HepG2 (cell line): ENCODE measurements at regions of chr12 and their contacts with region 1.

Region 1: GRCh38 chr12:53508534-53509199 is 1.4 kb upstream of the NPFF start:
- DNase-seq: peak; percentile 72
- ATAC-seq: peak; percentile 93
- H3K4me3 ChIP-seq: no peak overlapping the region
- H3K27ac ChIP-seq: no peak overlapping the region
- H3K4me1 ChIP-seq: no peaks in the 10 kb centered on the region
- H3K27me3 ChIP-seq: no peaks in the 10 kb centered on the region
- CTCF ChIP-seq: peak; percentile 96
- EP300 ChIP-seq: no peak
- POLR2A ChIP-seq: no peak
- RAD21 ChIP-seq: peak; percentile 86

Region 2: GRCh38 chr12:53352331-53353256 is 156.1 kb before region 1 on chr12:
- CTCF ChIA-PET with region 1: interaction called, 4 read pairs
- POLR2A ChIA-PET with region 1: no interaction called
- in situ Hi-C with region 1: no loop called
- intact Hi-C with region 1: loop called (anchors 2 kb)
- DNase-seq: peak; percentile 80
- ATAC-seq: peak; percentile 98
- H3K4me3 ChIP-seq: no peak overlapping the region
- H3K27ac ChIP-seq: no peak overlapping the region
- H3K4me1 ChIP-seq: peaks cover 22% of the 10 kb centered on the region
- H3K27me3 ChIP-seq: no peaks in the 10 kb centered on the region
- CTCF ChIP-seq: peak; percentile 93
- EP300 ChIP-seq: no peak
- POLR2A ChIP-seq: no peak
- RAD21 ChIP-seq: peak; percentile 89

Region 3: DNA sequence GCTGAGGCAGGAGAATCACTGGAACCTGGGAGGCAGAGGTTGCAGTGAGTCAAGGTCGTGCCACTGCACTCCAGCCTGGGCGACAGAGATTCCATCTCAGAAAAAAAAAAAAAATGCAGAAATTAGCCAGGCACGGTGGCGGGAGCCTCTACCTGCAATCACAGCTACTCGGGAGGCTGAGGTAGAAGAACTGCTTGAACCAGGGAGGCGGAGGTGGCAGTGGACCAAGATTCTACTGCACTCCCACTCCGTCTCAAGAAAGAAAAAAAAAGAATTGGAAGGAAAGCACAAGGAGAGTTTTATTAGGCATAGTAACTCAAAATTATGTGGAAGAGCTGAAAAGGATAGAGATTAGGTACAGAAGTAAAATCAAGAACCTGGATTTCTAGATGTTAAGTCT is 105.8 kb before region 1 on chr12:
- CTCF ChIA-PET with region 1: no interaction called
- POLR2A ChIA-PET with region 1: no interaction called
- in situ Hi-C with region 1: no loop called
- intact Hi-C with region 1: no loop called
- DNase-seq: no peak
- ATAC-seq: no peak
- H3K4me3 ChIP-seq: no peak overlapping the region
- H3K27ac ChIP-seq: no peak overlapping the region
- H3K4me1 ChIP-seq: peaks cover 5% of the 10 kb centered on the region
- H3K27me3 ChIP-seq: no peaks in the 10 kb centered on the region; a peak in 1 of 5 replicates
- CTCF ChIP-seq: no peak
- EP300 ChIP-seq: no peak
- POLR2A ChIP-seq: no peak
- RAD21 ChIP-seq: no peak

Region 4: GRCh38 chr12:53474819-53475218 is 33.8 kb before region 1 on chr12:
- CTCF ChIA-PET with region 1: no interaction called
- POLR2A ChIA-PET with region 1: no interaction called
- in situ Hi-C with region 1: no loop called
- intact Hi-C with region 1: loop called (anchors 5 kb)
- DNase-seq: no peak
- ATAC-seq: no peak
- H3K4me3 ChIP-seq: no peak overlapping the region
- H3K27ac ChIP-seq: no peak overlapping the region
- H3K4me1 ChIP-seq: no peaks in the 10 kb centered on the region; the same call in 1 of the 2 replicates
- H3K27me3 ChIP-seq: no peaks in the 10 kb centered on the region
- CTCF ChIP-seq: no peak
- EP300 ChIP-seq: no peak
- POLR2A ChIP-seq: no peak
- RAD21 ChIP-seq: no peak

Region 5: DNA sequence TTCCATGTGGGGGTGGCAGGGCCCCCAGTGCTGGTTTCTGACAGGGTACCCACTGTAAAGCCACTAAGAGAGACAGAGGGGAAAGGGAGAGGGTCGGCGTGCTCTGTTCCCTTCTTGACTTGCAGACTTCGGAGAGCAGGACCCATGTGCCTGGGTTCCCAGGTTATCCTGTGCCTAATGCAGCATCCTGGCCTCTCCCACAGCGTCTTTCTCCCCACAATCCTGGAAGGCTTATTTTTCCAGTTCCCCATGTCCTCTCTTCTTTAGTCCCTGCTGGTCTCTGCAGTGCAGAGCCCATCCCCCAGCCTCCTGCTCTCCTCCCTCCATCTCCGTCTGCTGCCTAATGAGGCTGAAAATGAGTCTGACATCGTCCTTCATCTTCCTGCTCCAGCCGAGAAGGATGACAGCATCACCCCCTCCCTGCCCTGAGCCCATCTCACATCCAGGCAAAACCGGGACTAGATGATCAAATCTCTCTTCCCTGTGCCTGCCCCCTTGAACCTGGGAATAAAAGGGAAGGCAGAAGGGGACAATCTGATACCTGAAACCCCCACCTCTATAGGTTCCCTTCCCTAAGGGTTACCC is 203.5 kb after region 1 on chr12:
- CTCF ChIA-PET with region 1: no interaction called
- POLR2A ChIA-PET with region 1: no interaction called
- in situ Hi-C with region 1: no loop called
- intact Hi-C with region 1: no loop called
- DNase-seq: no peak
- ATAC-seq: no peak
- H3K4me3 ChIP-seq: no peak overlapping the region
- H3K27ac ChIP-seq: no peak overlapping the region
- H3K4me1 ChIP-seq: no peaks in the 10 kb centered on the region
- H3K27me3 ChIP-seq: peaks cover 0 to 19% of the 10 kb centered on the region in 2 experiments; a peak in 2 of 5 replicates
- CTCF ChIP-seq: no peak
- EP300 ChIP-seq: no peak
- POLR2A ChIP-seq: no peak
- RAD21 ChIP-seq: no peak